H1 (cell line): ENCODE measurements at regions of chr3 and their contacts with region 1.

Region 1: GRCh38 chr3:108818404-108818803 is 4.2 kb upstream of the TRAT1 start:
- DNase-seq: peak in 1 of 2 experiments; percentile 34
- H3K4me3 ChIP-seq: no peak overlapping the region
- H3K27ac ChIP-seq: no peak overlapping the region
- H3K4me1 ChIP-seq: no peaks in the 10 kb centered on the region
- H3K27me3 ChIP-seq: no peaks in the 10 kb centered on the region
- CTCF ChIP-seq: peak; percentile 30 to 81 (median 65); a peak in 3 of 4 replicates
- EP300 ChIP-seq: no peak
- POLR2A ChIP-seq: no peak
- RAD21 ChIP-seq: peak; percentile 84 to 89

Region 2: DNA sequence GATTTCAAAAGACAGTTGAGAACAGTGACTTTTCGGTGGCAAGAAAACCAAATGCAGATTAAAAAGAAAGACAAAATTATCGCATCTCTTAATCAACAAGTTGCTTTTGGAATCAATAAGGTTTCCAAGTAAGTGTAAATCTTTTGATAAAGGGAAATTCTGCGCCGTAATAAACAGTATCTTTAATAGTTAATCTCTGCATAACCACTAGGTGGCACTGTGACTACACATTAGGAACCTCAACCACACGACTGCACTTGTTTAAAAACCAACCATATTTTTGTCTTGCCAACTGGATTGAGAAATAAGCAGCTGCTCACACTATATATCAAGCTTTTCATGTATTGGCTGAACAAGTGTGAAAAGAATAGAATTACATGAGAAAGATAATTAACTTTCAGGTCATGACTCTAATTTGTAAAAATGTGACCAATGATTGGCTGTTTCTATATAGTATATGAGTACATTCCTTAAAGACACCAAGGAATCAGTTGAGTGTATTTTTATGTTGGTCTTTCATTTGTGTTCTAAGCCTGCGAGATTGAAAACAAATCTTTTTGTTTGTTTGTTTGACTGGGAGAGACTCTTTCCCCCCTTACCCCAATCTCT is 156.2 kb before region 1 on chr3:
- CTCF ChIA-PET with region 1: interaction called, 13 read pairs
- POLR2A ChIA-PET with region 1: no interaction called
- DNase-seq: no peak
- H3K4me3 ChIP-seq: no peak overlapping the region
- H3K27ac ChIP-seq: no peak overlapping the region
- H3K4me1 ChIP-seq: peaks cover 0 to 2% (median 0%) of the 10 kb centered on the region in 4 experiments; a peak in 2 of 7 replicates
- H3K27me3 ChIP-seq: no peaks in the 10 kb centered on the region
- CTCF ChIP-seq: peak in 2 of 3 experiments; percentile 61 to 65; a peak in 3 of 4 replicates
- EP300 ChIP-seq: no peak
- POLR2A ChIP-seq: no peak
- RAD21 ChIP-seq: peak; percentile 83 to 87

Region 3: GRCh38 chr3:108845709-108846293 is 27.4 kb after region 1 on chr3:
- CTCF ChIA-PET with region 1: no interaction called
- POLR2A ChIA-PET with region 1: no interaction called
- DNase-seq: no peak
- H3K4me3 ChIP-seq: no peak overlapping the region
- H3K27ac ChIP-seq: no peak overlapping the region
- H3K4me1 ChIP-seq: no peaks in the 10 kb centered on the region
- H3K27me3 ChIP-seq: no peaks in the 10 kb centered on the region
- CTCF ChIP-seq: no peak
- EP300 ChIP-seq: no peak
- POLR2A ChIP-seq: no peak
- RAD21 ChIP-seq: no peak

Region 4: DNA sequence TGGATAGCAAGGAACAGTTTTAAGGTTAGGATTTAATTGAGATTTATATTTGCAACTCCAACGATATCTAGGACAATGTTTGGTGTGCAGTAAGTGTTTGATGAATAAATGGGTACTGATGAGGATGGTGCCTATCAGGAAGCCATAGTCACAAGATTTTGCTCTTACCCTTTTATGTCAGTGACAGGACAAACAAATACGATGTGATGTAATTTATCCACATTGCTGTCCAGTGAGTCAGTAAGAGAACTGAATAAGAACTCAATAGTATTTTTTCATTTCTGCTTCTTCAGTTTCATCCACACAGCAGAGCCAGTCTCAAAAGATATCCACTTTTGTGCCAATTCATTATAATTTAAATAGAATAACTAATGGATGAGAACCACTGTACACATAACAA is 336.6 kb after region 1 on chr3:
- CTCF ChIA-PET with region 1: no interaction called
- POLR2A ChIA-PET with region 1: no interaction called
- DNase-seq: no peak
- H3K4me3 ChIP-seq: no peak overlapping the region
- H3K27ac ChIP-seq: no peak overlapping the region
- H3K4me1 ChIP-seq: no peaks in the 10 kb centered on the region
- H3K27me3 ChIP-seq: no peaks in the 10 kb centered on the region
- CTCF ChIP-seq: no peak
- EP300 ChIP-seq: no peak
- POLR2A ChIP-seq: no peak
- RAD21 ChIP-seq: no peak